Activated T-helper 2 cell treated with anti-CD3 and anti-CD28 coated beads, Interferon-gamma antibody, Interleukin-2, Interleukin-4, amounts not matched to agents 10 μg/mL and 5 μg/mL and 100 μg/mL, durations not matched to agents 14 hours and 24 hours and 36 hours (primary cell): ENCODE measurements at regions of chr1 and their contacts with region 1.

Region 1: DNA sequence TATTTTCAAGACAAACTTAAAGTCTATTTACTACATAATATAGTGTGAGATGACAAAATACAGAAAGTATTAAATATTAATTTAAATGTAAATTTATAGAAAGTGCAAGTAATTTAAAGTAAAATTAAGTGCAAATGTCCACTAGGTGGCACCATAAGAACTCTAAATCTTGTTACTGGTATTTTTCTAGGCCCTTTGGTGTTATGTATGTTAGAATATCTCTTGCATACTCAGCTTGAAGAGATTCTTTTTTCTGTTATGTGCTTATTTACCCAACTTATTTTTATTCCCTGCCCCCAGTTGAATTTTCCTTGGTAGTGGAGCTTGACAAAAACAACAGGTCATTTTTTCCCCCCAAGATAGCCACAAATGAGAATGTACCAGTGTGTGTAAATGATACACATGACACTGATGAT is 71.5 kb downstream of the RPS6KC1 start:
- DNase-seq: no peak
- H3K4me3 Mint-ChIP-seq: no peak overlapping the region
- H3K27ac Mint-ChIP-seq: no peak overlapping the region
- H3K4me1 Mint-ChIP-seq: peaks cover 7% of the 10 kb centered on the region
- H3K27me3 Mint-ChIP-seq: no peaks in the 10 kb centered on the region

Region 2: GRCh38 chr1:213244664-213245091 is 122.2 kb after region 1 on chr1:
- intact Hi-C with region 1: loop called (anchors 10 kb)
- DNase-seq: no peak
- H3K4me3 Mint-ChIP-seq: no peak overlapping the region
- H3K27ac Mint-ChIP-seq: no peak overlapping the region
- H3K4me1 Mint-ChIP-seq: no peaks in the 10 kb centered on the region
- H3K27me3 Mint-ChIP-seq: no peaks in the 10 kb centered on the region

Region 3: DNA sequence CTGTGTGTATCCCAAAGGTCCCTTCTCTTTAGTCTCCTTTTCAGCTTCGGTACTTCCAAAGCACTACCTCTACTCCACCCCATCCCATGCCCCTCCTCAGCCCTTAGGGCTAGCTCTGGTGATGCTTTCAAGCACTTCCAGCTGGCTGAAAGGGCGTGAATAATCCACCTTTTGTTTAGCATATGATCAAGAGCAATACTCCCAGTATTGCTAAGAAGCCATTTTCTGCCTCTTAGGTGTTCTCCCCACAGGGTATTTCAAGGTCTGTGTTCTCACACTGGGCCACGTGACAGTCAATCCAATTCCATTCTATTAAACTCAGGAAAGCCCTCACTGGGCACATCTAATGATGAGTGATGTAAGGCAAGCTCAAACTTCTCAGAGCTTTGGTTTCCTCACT is 566.7 kb after region 1 on chr1:
- intact Hi-C with region 1: no loop called
- DNase-seq: no peak
- H3K4me3 Mint-ChIP-seq: no peak overlapping the region
- H3K27ac Mint-ChIP-seq: no peak overlapping the region
- H3K4me1 Mint-ChIP-seq: no peaks in the 10 kb centered on the region
- H3K27me3 Mint-ChIP-seq: no peaks in the 10 kb centered on the region